PC-9 (cell line): ENCODE measurements at regions of chr2 and their contacts with region 1.

Region 1: DNA sequence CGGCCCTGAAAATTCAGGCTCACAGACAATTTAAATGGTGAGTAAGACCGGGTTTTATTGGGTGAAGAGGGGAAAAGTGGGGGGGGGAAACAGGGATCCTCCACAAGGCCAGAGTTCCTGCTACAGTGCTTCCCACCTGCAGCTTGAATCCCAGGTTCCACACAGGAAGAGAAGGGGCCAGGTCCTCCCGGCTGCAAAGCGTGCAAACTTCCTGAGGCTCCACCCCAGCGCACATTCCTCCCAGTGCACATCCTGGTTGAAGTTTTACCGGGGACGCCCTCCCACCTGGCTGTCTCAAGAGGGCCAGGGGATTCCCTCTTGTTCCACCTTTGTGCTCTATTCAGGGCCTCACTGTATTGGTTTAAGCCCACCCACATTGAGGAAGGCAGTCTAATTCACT is 347.7 kb upstream of the REG3G start:
- DNase-seq: no peak
- H3K4me3 ChIP-seq: no peak overlapping the region
- H3K27ac ChIP-seq: no peak overlapping the region
- H3K4me1 ChIP-seq: no peaks in the 10 kb centered on the region
- H3K27me3 ChIP-seq: no peaks in the 10 kb centered on the region
- CTCF ChIP-seq: no peak

Region 2: DNA sequence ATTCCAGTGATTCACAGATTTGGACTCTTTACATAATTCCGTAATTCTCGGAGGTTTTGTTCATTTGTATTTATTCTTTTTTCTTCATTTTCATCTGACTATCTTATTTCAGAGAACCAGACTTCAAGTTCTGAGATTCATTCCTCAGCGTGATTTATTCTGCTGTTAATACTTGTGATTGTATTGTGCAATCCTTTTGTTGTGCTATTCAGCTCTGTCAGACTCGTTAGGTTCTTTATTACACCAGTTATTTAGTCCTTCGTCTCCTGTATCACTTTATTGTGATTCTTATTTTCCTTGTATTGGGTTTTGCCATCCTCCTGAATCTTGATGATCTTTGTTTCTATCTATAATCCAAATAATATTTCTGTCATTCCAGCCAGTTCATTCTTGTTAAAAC is 626.3 kb before region 1 on chr2:
- CTCF ChIA-PET with region 1: no interaction called
- POLR2A ChIA-PET with region 1: no interaction called
- intact Hi-C with region 1: no loop called
- DNase-seq: no peak
- H3K4me3 ChIP-seq: no peak overlapping the region
- H3K27ac ChIP-seq: no peak overlapping the region
- H3K4me1 ChIP-seq: no peaks in the 10 kb centered on the region
- H3K27me3 ChIP-seq: no peaks in the 10 kb centered on the region
- CTCF ChIP-seq: no peak

Region 3: GRCh38 chr2:78634425-78634824 is 43.3 kb before region 1 on chr2:
- CTCF ChIA-PET with region 1: no interaction called
- POLR2A ChIA-PET with region 1: no interaction called
- intact Hi-C with region 1: loop called (anchors 2 kb)
- DNase-seq: no peak
- H3K4me3 ChIP-seq: no peak overlapping the region
- H3K27ac ChIP-seq: no peak overlapping the region
- H3K4me1 ChIP-seq: no peaks in the 10 kb centered on the region
- H3K27me3 ChIP-seq: no peaks in the 10 kb centered on the region
- CTCF ChIP-seq: no peak

Region 4: GRCh38 chr2:78654941-78655340 is 22.8 kb before region 1 on chr2:
- CTCF ChIA-PET with region 1: no interaction called
- POLR2A ChIA-PET with region 1: no interaction called
- intact Hi-C with region 1: no loop called
- DNase-seq: no peak
- H3K4me3 ChIP-seq: no peak overlapping the region
- H3K27ac ChIP-seq: no peak overlapping the region
- H3K4me1 ChIP-seq: no peaks in the 10 kb centered on the region
- H3K27me3 ChIP-seq: no peaks in the 10 kb centered on the region
- CTCF ChIP-seq: no peak

Region 5: DNA sequence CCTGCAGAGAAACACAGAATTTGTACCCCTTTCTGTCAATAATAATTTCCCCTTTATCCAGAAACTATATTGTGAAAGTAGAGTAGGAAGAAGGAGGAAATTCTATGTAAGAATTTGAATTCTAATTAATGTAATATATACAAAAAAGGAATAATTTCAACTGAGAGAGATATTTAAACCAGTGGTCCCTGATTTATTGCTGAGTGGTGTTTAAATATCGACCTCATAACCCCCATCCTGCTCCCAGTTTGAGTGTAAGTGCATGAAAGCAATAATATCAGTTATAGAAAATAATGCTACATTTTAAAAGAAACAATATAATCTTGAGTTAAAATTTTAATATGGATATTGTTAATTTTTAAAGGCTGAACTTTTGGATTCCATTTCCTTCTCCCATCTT is 61.5 kb after region 1 on chr2:
- CTCF ChIA-PET with region 1: no interaction called
- POLR2A ChIA-PET with region 1: no interaction called
- intact Hi-C with region 1: no loop called
- DNase-seq: no peak
- H3K4me3 ChIP-seq: no peak overlapping the region
- H3K27ac ChIP-seq: no peak overlapping the region
- H3K4me1 ChIP-seq: no peaks in the 10 kb centered on the region
- H3K27me3 ChIP-seq: no peaks in the 10 kb centered on the region
- CTCF ChIP-seq: no peak

Region 6: DNA sequence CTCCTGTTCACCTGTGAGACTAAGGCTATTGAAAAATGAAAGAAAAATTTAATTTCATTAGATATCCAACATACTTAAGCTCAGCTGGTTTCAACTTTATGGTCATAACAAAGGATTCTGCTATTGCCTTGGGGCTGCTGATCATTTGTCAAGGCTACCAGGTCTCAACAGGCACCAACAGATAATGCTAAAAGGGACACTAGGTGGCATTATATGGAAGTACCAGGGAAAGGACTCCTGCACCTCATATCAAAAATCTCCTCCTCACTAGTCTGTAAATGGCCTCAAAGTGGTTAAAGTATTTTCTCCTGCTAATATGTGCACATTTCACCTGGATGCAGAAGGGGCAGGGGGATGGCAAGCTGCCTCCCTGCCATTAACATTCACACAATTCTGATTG is 649.7 kb after region 1 on chr2:
- CTCF ChIA-PET with region 1: no interaction called
- POLR2A ChIA-PET with region 1: no interaction called
- intact Hi-C with region 1: no loop called
- DNase-seq: no peak
- H3K4me3 ChIP-seq: no peak overlapping the region
- H3K27ac ChIP-seq: no peak overlapping the region
- H3K4me1 ChIP-seq: no peaks in the 10 kb centered on the region
- H3K27me3 ChIP-seq: no peaks in the 10 kb centered on the region
- CTCF ChIP-seq: no peak